Activated naive CD8-positive, alpha-beta T cell treated with anti-CD3 and anti-CD28 coated beads, Interleukin-2, amount 10 ng/mL, durations not matched to agents 7 days and 5 days (primary cell): ENCODE measurements at regions of chr19 and their contacts with region 1.

Region 1: DNA sequence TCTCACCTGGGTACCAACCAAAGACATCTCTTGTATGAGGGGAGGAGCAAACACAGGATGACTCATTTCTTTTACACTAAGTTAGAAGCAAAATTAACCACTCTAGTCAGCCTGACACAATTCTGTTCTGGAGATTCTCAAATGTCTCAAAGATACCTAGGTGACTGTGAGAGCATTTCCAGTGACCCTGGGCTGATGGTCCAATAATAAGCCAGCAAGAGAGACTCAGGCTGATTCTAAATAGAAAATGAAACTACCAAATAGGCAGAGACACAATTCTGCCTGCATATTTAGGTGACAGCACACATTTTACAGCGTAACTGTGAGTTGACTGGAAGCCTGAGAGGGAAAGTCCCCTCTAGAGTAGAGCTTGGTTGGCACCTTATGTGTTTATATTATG is 16.3 kb downstream of the ZNF91 start:
- DNase-seq: no peak
- ATAC-seq: no peak
- H3K4me3 Mint-ChIP-seq: no peak overlapping the region
- H3K27ac Mint-ChIP-seq: no peak overlapping the region
- H3K4me1 Mint-ChIP-seq: peaks cover 4% of the 10 kb centered on the region
- H3K27me3 Mint-ChIP-seq: no peaks in the 10 kb centered on the region

Region 2: GRCh38 chr19:23395041-23395721 is 16.2 kb after region 1 on chr19 and contains the start of gene ZNF91:
- POLR2A ChIA-PET with region 1: no interaction called
- DNase-seq: peak; percentile 86
- ATAC-seq: peak; percentile 97
- H3K4me3 Mint-ChIP-seq: peak within 1 kb of the TSS; percentile 97
- H3K27ac Mint-ChIP-seq: peak within 1 kb of the TSS; percentile 96
- H3K4me1 Mint-ChIP-seq: peaks cover 8% of the 10 kb centered on the region
- H3K27me3 Mint-ChIP-seq: no peaks in the 10 kb centered on the region
- total RNA-seq, gene ZNF91: 56.8 to 56.9 TPM

Region 3: DNA sequence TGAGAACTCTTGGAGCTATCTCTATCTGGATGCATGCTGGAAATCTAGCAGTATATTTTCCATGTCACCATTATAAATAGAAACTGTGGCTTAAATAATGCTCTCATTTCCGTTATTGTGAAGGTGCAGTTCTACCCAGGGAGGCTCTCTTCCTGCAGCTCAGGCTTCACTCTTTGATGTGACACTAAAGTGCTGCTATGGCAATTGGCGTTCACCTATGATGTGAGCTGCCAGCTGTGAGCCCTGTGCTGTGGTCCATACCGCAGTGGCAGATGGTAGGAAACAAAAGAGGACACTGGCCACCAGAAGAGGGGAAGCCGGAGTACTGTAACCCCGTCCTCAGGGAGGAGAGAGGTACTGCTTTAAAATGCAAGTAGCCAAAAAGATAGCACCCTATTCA is 420.4 kb after region 1 on chr19:
- POLR2A ChIA-PET with region 1: interaction called, 11 read pairs
- DNase-seq: peak; percentile 43
- ATAC-seq: peak; percentile 95
- H3K4me3 Mint-ChIP-seq: peak overlapping the region; percentile 78
- H3K27ac Mint-ChIP-seq: peak overlapping the region; percentile 91
- H3K4me1 Mint-ChIP-seq: peaks cover 18% of the 10 kb centered on the region
- H3K27me3 Mint-ChIP-seq: no peaks in the 10 kb centered on the region